ENCODE measurements at regions of chr1 and their contacts with region 1.

Region 1: GRCh38 chr1:89274411-89274857 is 1.8 kb upstream of the GBP5 start:
- DNase-seq: no peak
- ATAC-seq: peak; percentile 25
- H3K4me3 Mint-ChIP-seq: peak overlapping the region; percentile 71
- H3K27ac Mint-ChIP-seq: peak overlapping the region; percentile 86
- H3K4me1 Mint-ChIP-seq: peaks cover 62% of the 10 kb centered on the region
- H3K27me3 Mint-ChIP-seq: no peaks in the 10 kb centered on the region
- CTCF ChIP-seq: no peak

Region 2: DNA sequence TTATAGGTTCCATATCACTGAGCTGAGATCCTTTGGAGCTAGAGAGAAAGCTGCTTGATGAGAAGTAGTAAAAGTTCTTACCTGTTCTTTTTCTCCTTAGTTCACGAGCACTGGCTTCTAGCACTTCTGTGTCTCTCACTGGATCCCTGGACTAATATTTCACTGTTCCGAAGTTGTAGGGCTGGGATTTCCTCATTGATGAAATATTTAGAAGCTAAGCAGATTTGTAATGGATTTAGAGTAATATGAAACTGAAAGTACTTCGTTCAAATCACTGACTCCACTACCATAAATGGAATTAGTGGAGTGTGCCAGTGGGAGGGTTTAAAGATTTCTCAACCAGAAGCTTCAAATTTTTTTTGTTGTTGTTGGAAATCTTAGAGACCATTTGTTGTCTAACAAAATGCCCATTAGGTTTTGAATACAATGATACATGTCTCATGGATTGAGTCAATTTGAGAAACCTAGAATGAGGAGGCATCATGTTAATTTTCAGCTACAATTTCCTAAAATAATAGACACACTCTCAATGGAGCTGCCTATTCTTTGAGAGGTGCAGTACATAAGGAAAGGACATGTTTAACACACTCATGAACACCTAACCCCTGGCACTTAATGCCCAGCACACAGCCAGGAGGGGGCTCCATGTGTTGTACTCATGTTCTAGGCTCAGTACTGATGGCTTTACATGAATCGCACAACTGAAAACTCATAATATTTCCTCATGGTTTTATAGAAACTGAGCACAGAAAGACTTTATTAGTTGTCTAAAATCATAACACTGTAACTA is 209.2 kb before region 1 on chr1 and contains the start of gene GBP1:
- CTCF ChIA-PET with region 1: no interaction called
- POLR2A ChIA-PET with region 1: no interaction called
- intact Hi-C with region 1: loop called (anchors 2 kb)
- DNase-seq: no peak
- ATAC-seq: peak; percentile 72
- H3K4me3 Mint-ChIP-seq: peak within 1 kb of the TSS; percentile 90
- H3K27ac Mint-ChIP-seq: peak within 1 kb of the TSS; percentile 86
- H3K4me1 Mint-ChIP-seq: peaks cover 47% of the 10 kb centered on the region
- H3K27me3 Mint-ChIP-seq: no peaks in the 10 kb centered on the region
- CTCF ChIP-seq: no peak
- total RNA-seq, gene GBP1: 24.0 and 27.5 TPM in 2 replicates

Region 3: DNA sequence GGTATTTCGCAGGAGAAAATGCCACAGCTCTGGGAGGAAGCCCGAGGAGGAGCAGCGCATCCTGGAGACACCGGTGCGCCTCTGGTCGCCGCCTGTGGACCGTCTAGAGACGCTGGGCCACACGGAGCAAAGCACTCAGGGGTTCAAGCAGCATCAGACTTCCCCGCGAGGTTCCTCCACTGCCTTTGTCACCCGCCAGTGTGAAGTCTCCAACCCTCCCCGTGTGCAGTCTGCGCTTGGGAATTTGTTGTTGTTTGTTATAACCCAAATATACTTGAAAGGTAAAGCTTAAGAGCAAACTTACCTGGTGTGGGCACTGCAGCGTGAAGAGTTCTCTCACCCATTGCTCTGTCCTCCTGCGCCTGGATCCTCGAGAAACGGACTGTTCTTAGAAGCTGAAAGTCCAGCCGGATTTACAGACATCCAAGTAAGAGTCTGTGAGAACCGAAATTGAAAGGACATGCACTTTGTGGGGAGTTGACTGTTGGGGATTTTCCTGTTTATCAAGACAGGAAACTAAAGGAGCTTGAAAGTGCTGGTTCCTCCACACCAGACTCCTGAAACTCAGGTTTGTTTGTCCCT is 75.9 kb before region 1 on chr1 and contains the start of gene GBP4:
- CTCF ChIA-PET with region 1: interaction called, 5 read pairs
- POLR2A ChIA-PET with region 1: interaction called, 42 read pairs
- intact Hi-C with region 1: loop called (anchors 1 kb)
- DNase-seq: peak; percentile 27
- ATAC-seq: peak; percentile 47
- H3K4me3 Mint-ChIP-seq: peak within 1 kb of the TSS; percentile 96
- H3K27ac Mint-ChIP-seq: peak within 1 kb of the TSS; percentile 92
- H3K4me1 Mint-ChIP-seq: peaks cover 76% of the 10 kb centered on the region
- H3K27me3 Mint-ChIP-seq: no peaks in the 10 kb centered on the region
- CTCF ChIP-seq: no peak
- total RNA-seq, gene GBP4: 19.2 and 19.5 TPM in 2 replicates

Region 4: GRCh38 chr1:89286549-89287180 is 12.2 kb after region 1 on chr1:
- CTCF ChIA-PET with region 1: no interaction called
- POLR2A ChIA-PET with region 1: interaction called, 3 read pairs
- intact Hi-C with region 1: loop called (anchors 1 kb)
- DNase-seq: no peak
- ATAC-seq: peak; percentile 81
- H3K4me3 Mint-ChIP-seq: peak overlapping the region; percentile 64
- H3K27ac Mint-ChIP-seq: peak overlapping the region; percentile 66
- H3K4me1 Mint-ChIP-seq: peaks cover 18% of the 10 kb centered on the region
- H3K27me3 Mint-ChIP-seq: no peaks in the 10 kb centered on the region
- CTCF ChIP-seq: no peak

Measured in activated B cell treated with CpG ODN at 0.5 μM for 24 hours (primary cell).